IMR-90 (cell line): ENCODE measurements at regions of chr1 and their contacts with region 1.

Region 1: DNA sequence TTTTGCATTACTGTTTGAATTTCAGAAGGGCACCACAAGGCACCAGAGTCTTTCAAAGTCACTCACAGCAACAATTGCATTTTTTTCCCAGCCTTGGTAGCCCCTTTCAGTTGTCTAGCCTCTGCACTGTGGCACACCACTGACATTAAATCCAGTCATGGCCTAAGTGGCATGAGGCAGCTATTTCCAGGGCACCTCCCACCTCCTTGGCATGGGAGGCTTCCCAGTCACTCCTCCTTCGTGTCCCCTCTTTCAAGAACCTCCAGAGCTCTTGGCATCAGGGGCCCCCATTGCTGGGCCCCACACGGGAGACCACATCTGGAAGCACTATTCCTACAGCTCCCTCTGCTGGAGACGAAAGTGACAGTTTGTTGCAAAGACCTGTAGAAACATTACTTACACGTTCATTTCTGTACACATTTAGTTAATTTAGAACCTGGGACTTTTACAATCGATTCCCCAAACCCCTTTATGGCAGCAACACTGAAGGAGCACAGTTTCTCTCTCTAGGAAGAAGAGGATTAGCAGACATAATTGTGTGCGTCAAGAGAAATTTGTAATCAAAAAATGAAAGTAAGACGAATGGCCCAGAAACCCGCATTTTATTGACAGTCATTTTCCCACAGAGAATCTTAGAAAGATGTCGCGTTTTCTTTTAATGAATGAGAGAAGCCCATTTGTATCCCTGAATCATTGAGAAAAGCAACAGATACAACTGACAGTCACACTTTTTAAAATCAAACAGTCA is 5.7 kb upstream of the CHD5 start:
- DNase-seq: peak; percentile 41
- ATAC-seq: peak; percentile 59
- H3K4me3 ChIP-seq: no peak overlapping the region
- H3K27ac ChIP-seq: no peak overlapping the region
- H3K4me1 ChIP-seq: peaks cover 14% of the 10 kb centered on the region
- H3K27me3 ChIP-seq: peaks cover 5% of the 10 kb centered on the region; the same call in 1 of the 2 replicates
- CTCF ChIP-seq: peak; percentile 54
- POLR2A ChIP-seq: no peak
- RAD21 ChIP-seq: peak; percentile 44

Region 2: DNA sequence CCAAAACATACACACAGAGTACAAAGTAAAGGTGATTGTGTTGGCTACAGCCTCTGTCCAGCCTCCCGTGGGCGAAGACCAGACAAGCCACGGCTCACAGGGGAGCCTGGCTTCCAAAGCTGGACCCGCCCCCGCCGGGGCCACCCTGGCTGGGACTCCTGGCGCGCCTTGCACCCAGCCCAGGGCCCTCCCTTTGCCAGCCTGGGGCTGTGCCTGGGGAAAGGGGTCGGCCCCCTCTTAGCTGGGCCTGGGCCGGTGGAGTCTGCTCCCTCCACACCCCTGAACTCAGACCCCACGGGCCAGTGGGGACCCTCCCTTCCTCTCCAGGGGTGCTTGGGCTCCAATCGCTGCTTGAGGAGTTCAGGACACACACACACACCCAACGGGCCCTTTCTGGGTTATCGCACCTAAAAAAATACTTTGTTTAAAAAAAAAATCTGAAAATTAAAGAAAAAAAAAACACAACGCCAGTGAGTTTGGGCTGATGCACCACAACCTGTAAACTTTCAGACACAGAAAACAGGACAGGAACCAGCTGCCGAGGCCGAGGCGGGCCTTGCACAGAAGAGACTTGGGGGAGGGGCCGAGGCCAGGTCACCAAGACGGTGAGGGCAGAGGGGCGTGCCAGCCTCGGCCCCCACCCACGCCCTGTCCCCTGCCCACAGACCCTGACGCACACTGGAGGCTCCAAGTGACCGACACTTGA is 83.8 kb before region 1 on chr1:
- CTCF ChIA-PET with region 1: no interaction called
- POLR2A ChIA-PET with region 1: no interaction called
- dilution Hi-C with region 1: no loop called
- in situ Hi-C with region 1: no loop called
- intact Hi-C with region 1: loop called (anchors 2 kb)
- DNase-seq: no peak
- ATAC-seq: no peak
- H3K4me3 ChIP-seq: no peak overlapping the region
- H3K27ac ChIP-seq: no peak overlapping the region
- H3K4me1 ChIP-seq: no peaks in the 10 kb centered on the region; the same call in 1 of the 2 replicates
- H3K27me3 ChIP-seq: peaks cover 31% of the 10 kb centered on the region; the same call in 1 of the 2 replicates
- CTCF ChIP-seq: no peak
- POLR2A ChIP-seq: no peak
- RAD21 ChIP-seq: no peak